ENCODE measurements at regions of chr7 and their contacts with region 1.

Region 1: DNA sequence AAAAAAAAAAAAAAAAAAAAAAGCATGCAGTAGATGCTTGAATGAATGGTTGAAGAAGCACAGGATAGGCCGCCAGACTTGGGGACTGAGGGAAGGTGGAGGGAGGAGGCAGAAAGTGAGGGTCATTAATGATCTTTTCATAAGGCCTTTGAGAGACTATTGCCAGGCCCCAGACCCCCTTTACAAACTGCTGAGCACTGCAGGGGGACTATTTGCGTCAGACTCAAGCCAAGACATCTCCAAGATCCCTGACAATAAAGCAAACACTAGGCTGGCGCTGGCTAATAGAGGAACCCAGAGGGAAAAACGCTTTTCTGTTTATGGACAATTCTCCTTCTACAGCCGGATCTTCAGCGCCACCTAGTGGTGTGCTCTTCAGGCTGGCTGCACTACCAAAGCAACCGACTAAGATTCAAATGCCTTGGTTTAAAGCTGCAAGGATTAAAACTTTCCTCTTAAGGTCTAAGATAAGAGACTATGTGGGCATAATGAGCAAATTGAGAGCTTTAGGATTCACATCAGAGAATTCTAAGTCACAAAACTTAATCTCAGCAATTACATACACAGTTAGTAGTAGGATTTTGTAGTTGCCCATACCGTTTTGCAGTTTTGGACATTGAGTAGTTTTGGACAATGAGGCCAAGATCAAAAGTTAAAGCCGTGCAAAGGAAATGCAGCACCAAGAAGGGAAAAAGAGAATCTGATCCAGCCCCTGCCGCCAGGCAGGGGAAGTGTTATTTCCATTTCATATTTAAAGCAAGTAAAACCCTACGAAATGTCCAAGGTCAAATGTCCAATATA is 17.9 kb upstream of the AGK start:
- DNase-seq: peak; percentile 73 to 89 (median 78)
- H3K4me3 ChIP-seq: peak overlapping the region in 1 of 7 experiments; percentile 28
- H3K27ac ChIP-seq: no peak overlapping the region
- H3K4me1 ChIP-seq: peaks cover 0 to 2% (median 0%) of the 10 kb centered on the region in 4 experiments
- H3K27me3 ChIP-seq: peaks cover 0 to 7% (median 0%) of the 10 kb centered on the region in 5 experiments

Region 2: GRCh38 chr7:141144921-141145629 is 388.3 kb before region 1 on chr7:
- CTCF ChIA-PET with region 1: no interaction called
- POLR2A ChIA-PET with region 1: no interaction called
- DNase-seq: no peak
- H3K4me3 ChIP-seq: no peak overlapping the region
- H3K27ac ChIP-seq: no peak overlapping the region
- H3K4me1 ChIP-seq: no peaks in the 10 kb centered on the region
- H3K27me3 ChIP-seq: peaks cover 0 to 2% (median 0%) of the 10 kb centered on the region in 5 experiments

Region 3: GRCh38 chr7:141409801-141410329 is 123.5 kb before region 1 on chr7:
- CTCF ChIA-PET with region 1: no interaction called
- POLR2A ChIA-PET with region 1: no interaction called
- DNase-seq: no peak
- H3K4me3 ChIP-seq: no peak overlapping the region
- H3K27ac ChIP-seq: no peak overlapping the region
- H3K4me1 ChIP-seq: no peaks in the 10 kb centered on the region
- H3K27me3 ChIP-seq: peaks cover 0 to 29% (median 7%) of the 10 kb centered on the region in 5 experiments

Region 4: DNA sequence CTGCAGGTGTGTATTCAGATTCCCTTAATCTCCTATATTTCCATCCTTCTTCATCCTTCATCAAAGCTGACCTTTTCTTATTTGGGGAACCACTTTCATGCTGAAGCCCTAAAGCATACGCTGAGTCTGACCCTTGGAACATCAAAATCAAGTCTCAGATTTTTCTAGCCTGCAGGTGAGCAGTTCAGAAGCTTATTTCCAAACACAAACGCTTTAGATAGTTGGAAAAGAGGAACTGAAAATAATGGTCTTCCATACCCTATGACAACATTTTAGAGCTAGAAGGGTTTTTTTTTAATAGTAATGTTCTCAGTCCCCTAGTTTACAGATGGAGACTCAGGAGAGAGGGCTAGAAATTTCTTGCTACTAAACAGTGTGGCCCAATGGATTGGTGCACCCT is 16.2 kb after region 1 on chr7:
- CTCF ChIA-PET with region 1: interaction called, 15 read pairs
- POLR2A ChIA-PET with region 1: no interaction called
- DNase-seq: no peak
- H3K4me3 ChIP-seq: no peak overlapping the region
- H3K27ac ChIP-seq: no peak overlapping the region
- H3K4me1 ChIP-seq: peaks cover 5 to 16% (median 15%) of the 10 kb centered on the region in 4 experiments
- H3K27me3 ChIP-seq: no peaks in the 10 kb centered on the region

Region 5: DNA sequence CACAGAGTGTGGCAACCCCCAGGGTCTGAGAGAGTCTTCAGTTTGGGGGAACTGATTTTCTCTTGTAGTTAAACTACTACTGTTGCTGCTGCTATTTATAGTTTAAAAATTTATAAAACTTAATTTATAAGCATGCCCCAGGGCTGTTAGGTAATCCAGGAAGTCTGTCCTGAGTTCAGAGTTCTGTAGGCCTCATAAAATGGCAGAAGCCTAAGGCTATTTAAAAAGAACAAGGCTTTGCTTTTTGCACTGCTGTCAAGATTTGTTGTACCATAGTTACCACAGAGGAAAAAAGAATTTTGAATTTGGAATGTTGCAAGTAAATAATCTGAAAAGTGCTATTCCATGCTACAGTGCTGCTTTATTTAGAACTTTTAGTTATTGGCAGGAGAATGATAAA is 83.9 kb after region 1 on chr7:
- CTCF ChIA-PET with region 1: no interaction called
- POLR2A ChIA-PET with region 1: no interaction called
- DNase-seq: no peak
- H3K4me3 ChIP-seq: no peak overlapping the region
- H3K27ac ChIP-seq: no peak overlapping the region
- H3K4me1 ChIP-seq: no peaks in the 10 kb centered on the region
- H3K27me3 ChIP-seq: no peaks in the 10 kb centered on the region